ENCODE measurements at regions of chr9 and their contacts with region 1.

Region 1: GRCh38 chr9:131608493-131609037 is 63.2 kb downstream of the PRRT1B start:
- DNase-seq: peak; percentile 84
- H3K4me3 Mint-ChIP-seq: peak overlapping the region; percentile 54
- H3K27ac Mint-ChIP-seq: peak overlapping the region; percentile 73
- H3K4me1 Mint-ChIP-seq: peaks cover 29% of the 10 kb centered on the region
- H3K27me3 Mint-ChIP-seq: no peaks in the 10 kb centered on the region
- CTCF ChIP-seq: no peak

Region 2: GRCh38 chr9:131650254-131650653 is 41.7 kb after region 1 on chr9:
- CTCF ChIA-PET with region 1: no interaction called
- POLR2A ChIA-PET with region 1: interaction called, 11 read pairs
- intact Hi-C with region 1: loop called (anchors 2 kb)
- DNase-seq: peak; percentile 83
- H3K4me3 Mint-ChIP-seq: peak overlapping the region; percentile 71
- H3K27ac Mint-ChIP-seq: peak overlapping the region; percentile 99
- H3K4me1 Mint-ChIP-seq: peaks cover 26% of the 10 kb centered on the region
- H3K27me3 Mint-ChIP-seq: no peaks in the 10 kb centered on the region
- CTCF ChIP-seq: no peak

Region 3: DNA sequence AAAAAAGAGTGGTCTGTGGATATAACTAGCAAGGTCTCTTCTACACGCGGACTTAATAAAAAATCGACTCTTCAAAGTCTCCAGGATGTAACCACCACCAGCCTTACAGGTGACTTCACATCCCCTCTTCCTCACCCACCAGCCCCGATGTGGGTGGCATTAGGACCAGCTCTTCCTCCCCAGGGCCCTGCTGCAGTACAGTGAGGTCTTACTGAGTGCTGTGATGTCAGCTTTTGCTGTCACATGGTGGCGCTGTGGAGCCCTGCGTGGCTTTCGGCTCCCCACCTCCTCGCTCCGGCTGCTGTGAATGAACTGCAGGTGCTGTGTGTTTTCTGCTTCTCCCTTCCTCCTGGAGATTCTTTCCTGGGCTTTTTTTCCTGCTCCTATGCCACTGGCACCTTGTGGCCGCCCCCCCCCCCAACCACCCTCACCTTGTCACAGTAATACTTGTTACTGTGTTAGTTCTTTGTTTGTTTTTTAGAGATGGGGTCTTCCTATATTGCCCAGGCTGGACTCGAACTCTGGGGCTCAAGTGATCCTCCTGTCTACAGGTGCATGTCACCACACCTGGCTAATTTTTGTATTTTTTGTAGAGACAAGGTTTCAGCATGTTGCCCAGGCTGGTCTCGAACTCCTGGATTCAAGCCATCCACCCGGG is 147.1 kb after region 1 on chr9:
- CTCF ChIA-PET with region 1: no interaction called
- POLR2A ChIA-PET with region 1: no interaction called
- intact Hi-C with region 1: no loop called
- DNase-seq: peak; percentile 79
- H3K4me3 Mint-ChIP-seq: no peak overlapping the region
- H3K27ac Mint-ChIP-seq: no peak overlapping the region
- H3K4me1 Mint-ChIP-seq: no peaks in the 10 kb centered on the region
- H3K27me3 Mint-ChIP-seq: peaks cover 27% of the 10 kb centered on the region
- CTCF ChIP-seq: peak; percentile 87

Region 4: GRCh38 chr9:132049323-132049882 is 440.8 kb after region 1 on chr9:
- CTCF ChIA-PET with region 1: no interaction called
- POLR2A ChIA-PET with region 1: no interaction called
- intact Hi-C with region 1: no loop called
- DNase-seq: no peak
- H3K4me3 Mint-ChIP-seq: no peak overlapping the region
- H3K27ac Mint-ChIP-seq: no peak overlapping the region
- H3K4me1 Mint-ChIP-seq: no peaks in the 10 kb centered on the region
- H3K27me3 Mint-ChIP-seq: no peaks in the 10 kb centered on the region
- CTCF ChIP-seq: no peak

Measured in MCF 10A (cell line).